ENCODE measurements at regions of chr2 and their contacts with region 1.

Region 1: DNA sequence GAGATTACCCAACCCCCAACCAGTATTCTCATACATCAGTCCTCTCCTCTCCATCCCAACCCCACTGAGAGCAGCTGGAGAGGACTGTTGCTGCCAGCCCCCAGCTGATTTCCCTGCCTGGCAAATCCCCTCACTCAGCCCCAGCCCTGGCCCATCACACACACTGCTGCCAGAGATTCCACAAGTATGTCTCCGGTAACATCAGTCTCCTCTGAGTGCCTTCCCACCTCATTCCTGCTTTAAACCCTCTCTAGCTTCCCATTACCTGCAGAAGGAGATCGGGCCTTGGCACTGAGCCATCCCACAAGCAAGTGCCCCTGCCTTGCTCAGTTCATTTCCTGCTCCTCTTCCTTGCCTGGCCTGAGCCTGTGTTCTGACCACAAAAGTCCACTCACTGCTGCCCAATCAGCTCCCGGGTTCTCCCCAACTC is 50.6 kb upstream of the ZFP36L2 start:
- DNase-seq: no peak
- H3K4me3 ChIP-seq: no peak overlapping the region
- H3K27me3 ChIP-seq: no peaks in the 10 kb centered on the region
- CTCF ChIP-seq: no peak

Region 2: DNA sequence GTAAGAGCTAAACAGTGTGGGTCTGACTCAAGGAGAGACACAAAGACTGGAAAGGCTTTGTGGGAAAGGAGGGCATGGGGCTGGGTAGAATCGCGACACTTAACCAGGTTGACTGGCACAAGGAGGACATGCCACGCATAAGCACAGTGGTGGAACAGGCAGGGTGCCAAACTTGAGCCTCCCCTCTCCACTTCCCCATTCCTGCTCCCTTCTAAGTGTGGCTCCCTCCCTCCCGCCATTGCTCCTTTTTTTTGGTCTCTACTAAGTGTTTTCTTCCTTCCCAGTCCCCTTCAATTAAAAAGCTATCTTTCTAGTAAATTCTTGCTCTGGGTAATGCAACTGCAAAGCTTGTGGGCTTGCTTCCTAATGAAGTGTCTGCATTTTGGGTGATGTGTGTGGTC is 10.3 kb before region 1 on chr2:
- CTCF ChIA-PET with region 1: no interaction called
- POLR2A ChIA-PET with region 1: no interaction called
- DNase-seq: no peak
- H3K4me3 ChIP-seq: no peak overlapping the region
- H3K27me3 ChIP-seq: no peaks in the 10 kb centered on the region
- CTCF ChIP-seq: no peak

Region 3: DNA sequence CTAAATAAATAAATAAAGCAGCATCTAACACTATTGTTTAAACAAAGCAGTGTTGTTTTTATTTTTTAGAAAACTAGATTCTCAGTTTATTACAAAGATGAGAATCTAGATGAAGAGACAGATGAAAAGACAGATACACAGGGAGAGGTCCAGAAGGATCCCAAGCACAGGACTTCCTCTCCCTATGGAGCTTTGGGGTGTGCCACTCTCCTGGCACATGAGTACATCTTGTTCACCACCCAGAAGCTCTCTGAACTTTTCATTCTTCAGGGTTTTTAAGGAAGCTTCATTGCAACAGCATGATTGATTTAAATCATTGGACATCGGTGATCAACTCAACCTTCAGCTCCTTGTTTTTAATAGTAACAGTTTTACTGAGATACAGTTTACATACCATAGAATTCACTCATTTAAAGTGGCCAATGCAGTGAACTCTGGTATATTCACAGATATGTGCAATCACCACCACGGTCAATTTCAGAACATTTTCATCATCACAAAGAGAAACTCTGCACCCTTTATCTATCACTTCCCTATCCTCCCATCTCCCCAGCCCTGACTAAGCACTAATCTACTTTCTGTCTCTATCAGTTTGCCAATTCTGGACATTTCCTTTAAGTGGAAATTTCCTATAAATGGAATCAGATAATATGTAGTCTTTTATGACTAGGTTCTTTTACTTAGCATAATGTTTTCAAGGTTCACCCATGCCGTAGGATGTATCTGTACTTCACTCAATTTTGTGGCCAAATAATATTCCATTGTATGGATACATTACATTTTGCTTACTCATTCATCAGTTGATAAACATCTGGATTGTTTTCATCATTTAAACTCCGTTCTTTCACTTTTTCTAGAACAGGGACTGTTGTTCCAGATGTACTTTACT is 11.7 kb after region 1 on chr2:
- CTCF ChIA-PET with region 1: interaction called, 10 read pairs
- POLR2A ChIA-PET with region 1: no interaction called
- DNase-seq: no peak
- H3K4me3 ChIP-seq: no peak overlapping the region
- H3K27me3 ChIP-seq: no peaks in the 10 kb centered on the region
- CTCF ChIP-seq: no peak

Measured in BJ (cell line).